ENCODE measurements at regions of chr4 and their contacts with region 1.

Region 1: DNA sequence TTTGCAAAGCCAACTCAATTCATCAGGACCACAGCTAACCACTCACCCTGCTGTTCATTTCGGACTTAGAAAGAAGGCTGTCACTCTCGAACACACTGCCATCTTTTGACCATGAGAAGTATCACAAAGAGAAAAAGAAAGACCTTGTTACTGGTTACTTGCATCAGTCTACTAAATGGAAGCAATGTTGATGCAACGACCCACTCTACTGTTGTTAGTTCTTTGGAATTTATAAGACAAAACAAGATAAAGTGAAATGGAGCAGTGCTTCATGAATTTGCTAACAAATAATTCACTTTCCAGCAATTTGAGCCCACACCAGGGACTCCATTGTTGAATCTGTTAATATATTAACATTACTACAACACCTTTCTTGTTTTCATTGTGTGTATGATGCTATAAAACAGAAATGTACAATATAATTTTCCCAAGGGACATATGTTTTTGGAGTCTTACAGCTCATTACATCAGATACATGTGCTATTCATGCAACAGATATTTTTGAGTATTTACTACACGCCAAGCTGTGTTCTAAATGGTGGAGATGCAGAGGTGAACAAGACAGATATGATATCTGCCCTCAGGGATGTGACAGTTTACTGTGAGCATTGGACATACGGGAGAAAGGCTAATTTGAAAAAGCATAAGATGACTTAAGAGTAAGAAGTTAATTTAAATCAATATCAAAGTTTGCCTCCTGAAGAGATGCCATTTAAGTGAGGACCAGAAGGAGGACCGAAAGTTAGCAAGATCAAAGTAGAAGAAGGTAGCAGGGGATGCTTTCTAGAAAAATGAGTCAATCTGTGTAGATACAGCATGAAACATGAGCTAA is 87.2 kb downstream of the AREG start:
- DNase-seq: peak in 1 of 2 donors; percentile 67
- H3K4me3 ChIP-seq: no peak overlapping the region
- H3K27ac ChIP-seq: no peak overlapping the region
- H3K4me1 ChIP-seq: peaks cover 0 to 6% (median 0%) of the 10 kb centered on the region in 4 donors
- H3K27me3 ChIP-seq: no peaks in the 10 kb centered on the region
- CTCF ChIP-seq: peak in 5 of 7 experiments; percentile 26 to 67 (median 44)
- EP300 ChIP-seq: no peak
- POLR2A ChIP-seq: no peak

Region 2: DNA sequence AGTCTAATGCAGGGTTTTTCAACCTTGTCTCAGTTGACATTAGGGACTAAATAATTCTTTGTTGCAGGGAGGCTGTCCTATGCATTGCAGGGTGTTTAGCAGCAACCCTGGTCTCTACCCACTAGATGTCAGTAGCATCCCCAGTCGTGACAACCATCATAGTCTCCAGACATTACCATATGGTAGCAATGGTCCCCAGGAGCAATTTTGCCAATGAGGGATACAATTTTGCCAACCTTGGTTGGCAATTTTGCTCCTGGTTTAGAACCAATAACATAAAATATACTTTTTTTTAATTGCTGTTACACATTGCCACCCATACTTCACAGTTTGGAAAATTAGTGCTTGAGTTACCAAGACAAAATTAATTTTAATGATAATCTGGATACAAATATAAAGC is 161.3 kb before region 1 on chr4:
- intact Hi-C with region 1: loop called (anchors 10 kb)
- DNase-seq: peak in 1 of 2 donors; percentile 68
- H3K4me3 ChIP-seq: no peak overlapping the region
- H3K27ac ChIP-seq: no peak overlapping the region
- H3K4me1 ChIP-seq: peaks cover 0 to 11% (median 1%) of the 10 kb centered on the region in 4 donors
- H3K27me3 ChIP-seq: peaks cover 0 to 2% (median 0%) of the 10 kb centered on the region in 3 donors
- CTCF ChIP-seq: peak in 5 of 7 experiments; percentile 27 to 48 (median 44)
- EP300 ChIP-seq: no peak
- POLR2A ChIP-seq: no peak

Region 3: GRCh38 chr4:74632634-74633033 is 100.5 kb after region 1 on chr4:
- intact Hi-C with region 1: no loop called
- DNase-seq: peak; percentile 25 to 66
- H3K4me3 ChIP-seq: no peak overlapping the region
- H3K27ac ChIP-seq: peak overlapping the region in 1 of 5 donors; percentile 35
- H3K4me1 ChIP-seq: peaks cover 0 to 13% (median 8%) of the 10 kb centered on the region in 4 donors
- H3K27me3 ChIP-seq: no peaks in the 10 kb centered on the region
- CTCF ChIP-seq: no peak
- EP300 ChIP-seq: no peak
- POLR2A ChIP-seq: no peak

Region 4: GRCh38 chr4:74770226-74770910 is 238.2 kb after region 1 on chr4:
- intact Hi-C with region 1: no loop called
- DNase-seq: no peak
- H3K4me3 ChIP-seq: no peak overlapping the region
- H3K27ac ChIP-seq: no peak overlapping the region
- H3K4me1 ChIP-seq: peaks cover 8 to 35% (median 13%) of the 10 kb centered on the region in 4 donors
- H3K27me3 ChIP-seq: no peaks in the 10 kb centered on the region
- CTCF ChIP-seq: no peak
- EP300 ChIP-seq: no peak
- POLR2A ChIP-seq: no peak

Region 5: GRCh38 chr4:74823194-74823593 is 291.0 kb after region 1 on chr4:
- intact Hi-C with region 1: no loop called
- DNase-seq: no peak
- H3K4me3 ChIP-seq: no peak overlapping the region
- H3K27ac ChIP-seq: no peak overlapping the region
- H3K4me1 ChIP-seq: no peaks in the 10 kb centered on the region
- H3K27me3 ChIP-seq: no peaks in the 10 kb centered on the region
- CTCF ChIP-seq: no peak
- EP300 ChIP-seq: no peak
- POLR2A ChIP-seq: no peak

Region 6: GRCh38 chr4:75036046-75036830 is 504.1 kb after region 1 on chr4:
- intact Hi-C with region 1: no loop called
- DNase-seq: no peak
- H3K4me3 ChIP-seq: no peak overlapping the region
- H3K27ac ChIP-seq: no peak overlapping the region
- H3K4me1 ChIP-seq: peaks cover 0 to under 1% (median 0%) of the 10 kb centered on the region in 4 donors
- H3K27me3 ChIP-seq: no peaks in the 10 kb centered on the region
- CTCF ChIP-seq: no peak
- EP300 ChIP-seq: no peak
- POLR2A ChIP-seq: no peak